Heart left ventricle (tissue), 16 donors: ENCODE measurements at regions of chr4 and their contacts with region 1.

Region 1: GRCh38 chr4:99894161-99894997 is at the start of gene LAMTOR3:
- DNase-seq: peak; percentile 91 to 95 (median 93)
- ATAC-seq: peak; percentile 97 to 100 (median 99)
- H3K4me3 ChIP-seq: peak within 1 kb of the TSS; percentile 74 to 93 (median 86)
- H3K27ac ChIP-seq: peak within 1 kb of the TSS; percentile 48 to 87 (median 82)
- H3K4me1 ChIP-seq: peaks cover 0 to 47% (median 23%) of the 10 kb centered on the region in 12 donors
- H3K27me3 ChIP-seq: no peaks in the 10 kb centered on the region
- CTCF ChIP-seq: no peak
- POLR2A ChIP-seq: peak in 1 of 2 donors; percentile 36
- total RNA-seq, gene LAMTOR3: 26.6 to 40.0 (median 32.9) TPM

Region 2: DNA sequence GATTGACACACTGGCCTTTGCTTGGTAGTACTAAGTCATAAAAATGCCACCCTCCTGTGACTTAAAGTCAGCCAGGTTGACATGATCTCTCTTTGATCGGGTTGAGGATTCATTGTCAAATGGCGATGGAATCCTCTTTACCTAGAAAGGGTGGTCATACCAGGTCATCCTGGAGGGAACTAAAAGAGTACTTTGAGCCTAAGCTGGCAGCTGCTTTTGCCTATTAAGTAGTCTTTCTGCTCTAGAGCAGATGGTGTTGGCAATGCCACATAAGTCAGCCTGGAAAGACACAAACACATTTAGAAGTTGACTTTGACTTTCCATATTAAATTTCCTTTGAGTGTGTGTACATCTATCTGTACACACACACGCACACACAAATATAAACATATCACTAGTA is 197.6 kb before region 1 on chr4:
- intact Hi-C with region 1: no loop called
- DNase-seq: no peak
- ATAC-seq: no peak
- H3K4me3 ChIP-seq: no peak overlapping the region
- H3K27ac ChIP-seq: no peak overlapping the region
- H3K4me1 ChIP-seq: no peaks in the 10 kb centered on the region
- H3K27me3 ChIP-seq: no peaks in the 10 kb centered on the region
- CTCF ChIP-seq: no peak
- POLR2A ChIP-seq: no peak

Region 3: GRCh38 chr4:99879458-99879857 is 14.9 kb before region 1 on chr4:
- intact Hi-C with region 1: no loop called
- DNase-seq: no peak
- ATAC-seq: no peak
- H3K4me3 ChIP-seq: no peak overlapping the region
- H3K27ac ChIP-seq: no peak overlapping the region
- H3K4me1 ChIP-seq: no peaks in the 10 kb centered on the region
- H3K27me3 ChIP-seq: no peaks in the 10 kb centered on the region
- CTCF ChIP-seq: no peak
- POLR2A ChIP-seq: no peak

Region 4: DNA sequence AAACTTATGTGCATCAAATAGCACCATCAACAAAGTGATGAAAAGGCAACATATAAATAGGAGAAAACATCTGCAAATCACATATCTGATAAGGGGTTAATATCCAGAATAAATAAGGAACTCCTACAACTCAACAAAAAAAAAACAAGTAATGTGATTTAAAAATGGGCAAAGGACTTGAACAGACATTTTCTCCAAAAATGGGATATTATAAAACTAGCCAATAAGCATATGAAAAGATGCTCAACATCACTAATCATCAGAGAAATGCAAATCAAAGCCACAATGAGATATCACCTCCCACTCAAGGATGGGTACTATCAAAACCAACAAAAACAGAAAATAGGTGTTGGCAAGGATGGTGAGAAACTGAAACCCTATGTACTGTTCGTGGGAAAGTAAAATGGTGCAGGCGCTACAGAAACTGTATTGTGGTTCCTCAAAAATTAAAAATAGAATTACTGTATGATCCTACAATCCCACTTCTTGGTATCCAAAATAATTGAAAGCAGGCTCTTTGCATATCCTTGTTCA is 49.6 kb after region 1 on chr4:
- intact Hi-C with region 1: loop called in 9 of 10 experiments (anchors 2 to 5 kb)
- DNase-seq: no peak
- ATAC-seq: no peak
- H3K4me3 ChIP-seq: peak overlapping the region in 1 of 12 donors; percentile 9
- H3K27ac ChIP-seq: no peak overlapping the region
- H3K4me1 ChIP-seq: peaks cover 0 to 56% (median 40%) of the 10 kb centered on the region in 12 donors
- H3K27me3 ChIP-seq: no peaks in the 10 kb centered on the region
- CTCF ChIP-seq: no peak
- POLR2A ChIP-seq: no peak

Region 5: GRCh38 chr4:99949034-99949998 is 54.9 kb after region 1 on chr4:
- intact Hi-C with region 1: loop called (anchors 2 to 5 kb)
- DNase-seq: peak; percentile 84 to 90 (median 86)
- ATAC-seq: peak; percentile 14 to 48 (median 33)
- H3K4me3 ChIP-seq: peak overlapping the region; percentile 68 to 97 (median 85)
- H3K27ac ChIP-seq: peak overlapping the region; percentile 31 to 96 (median 88)
- H3K4me1 ChIP-seq: peaks cover 0 to 47% (median 33%) of the 10 kb centered on the region in 12 donors
- H3K27me3 ChIP-seq: no peaks in the 10 kb centered on the region
- CTCF ChIP-seq: peak; percentile 70 to 92 (median 84)
- POLR2A ChIP-seq: no peak